ENCODE measurements at regions of chr15 and their contacts with region 1.

Region 1: DNA sequence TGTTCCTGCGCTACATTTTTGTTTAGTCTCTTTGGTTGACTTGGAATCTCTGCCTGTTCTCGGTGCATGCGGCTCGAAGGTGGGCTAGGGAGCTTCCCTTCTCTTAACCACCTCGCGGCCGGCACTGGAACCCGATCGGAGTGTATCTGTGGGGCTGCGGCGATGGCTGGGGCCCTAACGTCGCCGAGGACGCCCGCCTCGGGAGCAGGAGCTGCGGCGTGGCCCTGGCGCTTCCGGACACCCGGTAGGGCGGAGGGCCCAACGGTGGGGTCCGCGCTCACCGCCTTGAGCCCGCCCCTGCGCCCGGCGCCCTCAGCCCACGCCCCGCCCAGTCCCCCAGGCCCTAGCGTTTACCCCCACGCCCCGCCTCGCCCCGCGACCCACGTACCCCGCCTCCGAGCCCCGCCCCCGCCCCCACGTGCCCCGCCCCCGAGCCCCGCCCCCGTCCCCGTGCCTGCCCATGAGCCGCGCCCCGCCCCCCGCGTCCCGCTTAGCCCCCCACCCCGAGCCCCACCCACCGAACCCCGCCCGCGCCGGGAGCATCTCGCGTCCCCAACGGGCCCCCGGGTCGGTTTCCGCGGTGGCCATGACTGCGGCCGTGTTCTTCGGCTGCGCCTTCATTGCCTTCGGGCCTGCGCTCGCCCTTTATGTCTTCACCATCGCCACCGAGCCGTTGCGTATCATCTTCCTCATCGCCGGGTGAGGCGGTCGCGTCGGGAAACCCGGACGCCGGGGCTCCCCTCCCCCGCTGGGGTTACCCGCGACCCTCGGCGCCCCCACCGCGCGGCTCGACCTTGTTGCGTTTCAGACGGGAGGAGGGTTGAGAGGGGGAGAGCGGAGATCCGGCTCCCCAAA is at the start of gene APH1B:
- DNase-seq: peak; percentile 94
- ATAC-seq: peak; percentile 97
- total RNA-seq, gene APH1B: 6.2 TPM

Region 2: GRCh38 chr15:63188926-63189871 is 88.1 kb before region 1 on chr15 and contains the start of gene RAB8B:
- intact Hi-C with region 1: loop called (anchors 2 kb)
- DNase-seq: peak; percentile 100
- ATAC-seq: peak; percentile 99
- total RNA-seq, gene RAB8B: 12.3 TPM

Region 3: GRCh38 chr15:63221346-63221745 is 55.9 kb before region 1 on chr15:
- intact Hi-C with region 1: loop called (anchors 5 kb)
- DNase-seq: no peak
- ATAC-seq: peak; percentile 74

Region 4: GRCh38 chr15:63348392-63348791 is 71.1 kb after region 1 on chr15:
- intact Hi-C with region 1: no loop called
- DNase-seq: peak; percentile 77
- ATAC-seq: peak; percentile 21